ENCODE measurements at regions of chr22 and their contacts with region 1.

Region 1: DNA sequence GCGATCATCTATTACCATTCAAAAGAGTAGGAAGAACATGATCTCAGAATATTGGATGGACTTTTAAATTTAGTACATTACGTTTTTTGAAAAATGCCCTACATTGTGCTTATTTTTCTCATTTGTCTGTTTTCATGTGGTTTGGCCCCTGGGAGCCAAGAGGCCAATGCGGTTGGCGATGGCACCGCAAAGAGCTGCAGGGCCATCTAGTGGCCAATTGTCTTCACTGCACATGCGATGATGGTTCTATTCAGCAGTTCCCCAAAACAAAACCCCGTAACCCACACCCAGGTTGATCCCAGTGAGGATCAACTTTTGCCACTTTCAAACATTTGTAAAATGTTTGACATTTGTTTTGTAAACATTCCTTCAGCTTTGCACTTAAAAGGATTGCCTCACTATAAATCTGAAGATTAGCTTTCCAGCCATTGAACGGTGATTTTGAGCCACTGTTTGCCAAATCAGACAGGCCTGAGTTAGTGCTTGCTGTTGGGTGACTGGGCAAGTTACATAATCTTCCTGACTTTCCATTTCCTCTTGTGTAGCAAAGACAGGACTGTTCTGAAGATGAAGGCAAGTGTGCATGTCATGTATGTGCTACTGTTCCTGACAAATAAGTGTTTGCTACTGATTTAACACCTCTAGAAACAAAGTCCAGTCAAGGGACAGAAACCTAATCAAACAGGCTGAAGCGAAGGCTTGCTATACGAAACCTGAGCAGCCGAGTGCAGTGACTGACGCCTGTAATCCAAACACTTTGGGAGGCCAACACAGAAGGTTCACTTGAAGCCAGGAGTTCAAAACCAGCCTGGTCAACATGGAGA is 29.2 kb upstream of the XBP1 start:
- DNase-seq: peak; percentile 79 to 85 (median 84)
- ATAC-seq: peak; percentile 91 to 98 (median 95)
- H3K4me3 ChIP-seq: peak overlapping the region in 1 of 3 donors; percentile 14
- H3K27ac ChIP-seq: peak overlapping the region; percentile 5 to 72 (median 24)
- H3K4me1 ChIP-seq: peaks cover 0 to 22% (median 10%) of the 10 kb centered on the region in 4 donors
- H3K27me3 ChIP-seq: no peaks in the 10 kb centered on the region
- CTCF ChIP-seq: peak; percentile 97 to 99 (median 98)
- POLR2A ChIP-seq: no peak

Region 2: DNA sequence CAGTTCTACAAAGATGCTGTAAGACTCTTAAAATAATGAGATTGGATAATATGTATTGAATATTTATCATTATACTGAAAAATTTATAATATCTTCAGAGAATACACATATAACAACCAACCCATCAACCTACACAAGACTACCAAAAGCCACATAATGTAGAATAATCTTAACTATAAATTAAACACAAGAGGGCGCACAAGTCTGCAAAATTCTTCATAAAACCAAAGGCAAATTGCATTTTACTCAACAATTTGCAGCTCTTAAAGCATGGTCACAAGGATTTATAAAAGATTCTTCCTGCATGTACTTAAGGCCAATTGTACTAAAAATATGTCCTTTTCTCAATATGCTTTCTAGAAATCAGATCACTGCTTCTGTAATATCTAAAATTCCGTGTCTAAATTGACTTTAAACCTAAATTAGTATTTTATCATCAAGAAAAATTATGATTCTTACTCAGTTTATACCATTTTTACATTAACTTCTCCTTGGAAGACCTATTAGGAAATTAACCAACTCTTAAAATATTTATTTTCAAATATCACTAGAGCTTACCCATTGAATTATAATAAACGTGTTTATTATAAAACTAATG is 228.9 kb before region 1 on chr22:
- intact Hi-C with region 1: loop called (anchors 5 to 10 kb)
- DNase-seq: no peak
- ATAC-seq: peak; percentile 43 to 76 (median 68)
- H3K4me3 ChIP-seq: no peak overlapping the region
- H3K27ac ChIP-seq: no peak overlapping the region
- H3K4me1 ChIP-seq: no peaks in the 10 kb centered on the region
- H3K27me3 ChIP-seq: no peaks in the 10 kb centered on the region
- CTCF ChIP-seq: peak; percentile 54 to 62 (median 56)
- POLR2A ChIP-seq: no peak

Measured in right lobe of liver (tissue), 6 donors.